Naive thymus-derived CD4-positive, alpha-beta T cell (primary cell): ENCODE measurements at regions of chrX and their contacts with region 1.

Region 1: DNA sequence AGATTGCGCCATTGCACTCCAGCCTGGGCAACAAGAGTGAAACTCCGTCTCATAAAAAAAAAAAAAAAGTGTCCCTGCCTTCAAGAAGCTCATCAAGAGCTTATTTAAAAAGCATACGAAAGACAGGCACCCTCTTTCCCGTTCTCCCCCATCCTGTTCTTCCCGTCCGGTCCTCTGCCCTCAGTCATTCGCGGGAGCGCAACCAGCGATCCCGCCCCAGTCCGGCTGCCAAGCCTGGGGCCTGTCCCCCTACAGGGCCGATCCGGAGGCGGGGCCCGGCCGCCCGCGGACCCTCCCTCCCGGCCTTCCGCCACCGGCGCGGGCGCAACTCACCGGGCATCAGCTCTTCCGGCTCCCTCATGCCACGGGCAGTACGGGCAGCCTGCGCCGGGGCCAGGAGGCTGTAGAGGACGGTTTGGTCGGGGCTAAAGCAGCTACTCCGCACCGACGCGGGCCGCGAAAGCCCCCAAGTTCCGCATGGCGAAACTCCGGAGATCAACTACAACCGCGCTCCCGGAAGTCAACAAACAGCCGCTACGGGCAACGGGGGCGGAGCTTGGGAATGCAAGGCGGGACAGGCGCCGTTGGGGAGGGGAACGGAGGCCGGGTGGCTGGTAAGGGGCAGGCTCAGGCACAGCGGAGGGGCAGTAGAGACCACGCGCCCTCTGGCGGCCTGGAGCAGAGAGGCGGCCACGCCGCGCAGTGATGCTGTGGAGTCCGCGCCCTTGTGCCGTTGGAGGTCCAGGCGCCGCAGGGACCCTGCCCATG is at the start of gene RPGR:
- DNase-seq: peak; percentile 80 to 91 (median 88)
- ATAC-seq: peak; percentile 99
- H3K4me3 ChIP-seq: peak within 1 kb of the TSS; percentile 67
- H3K4me3 Mint-ChIP-seq: peak within 1 kb of the TSS; percentile 88 to 96 (median 92)
- H3K27ac ChIP-seq: peak within 1 kb of the TSS; percentile 77
- H3K27ac Mint-ChIP-seq: peak within 1 kb of the TSS; percentile 80 to 98 (median 93)
- H3K4me1 ChIP-seq: peaks cover 0 to 12% of the 10 kb centered on the region in 2 donors
- H3K4me1 Mint-ChIP-seq: peaks cover 1 to 28% (median 26%) of the 10 kb centered on the region in 7 donors
- H3K27me3 ChIP-seq: no peaks in the 10 kb centered on the region
- H3K27me3 Mint-ChIP-seq: no peaks in the 10 kb centered on the region
- total RNA-seq, gene RPGR: 4.3 to 26.0 (median 10.9) TPM

Region 2: DNA sequence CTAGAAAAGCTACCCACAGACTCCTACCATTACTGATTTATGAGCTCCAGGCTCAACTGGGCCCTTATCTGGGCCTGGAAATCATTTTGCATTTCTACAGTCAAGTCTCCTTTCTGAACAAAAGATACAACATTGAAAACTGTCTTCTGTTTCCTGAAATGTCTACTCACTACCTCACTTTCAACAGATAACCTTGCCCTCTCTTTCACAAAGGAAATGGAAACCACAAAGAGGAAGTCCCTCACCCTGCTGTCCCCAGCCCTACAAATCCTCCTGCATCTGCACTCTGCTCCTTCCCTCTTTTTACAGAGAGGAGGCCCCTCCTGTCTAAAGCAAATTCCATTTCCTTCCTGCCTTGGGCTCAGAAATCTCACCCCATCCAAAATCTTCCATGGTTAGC is 572.2 kb before region 1 on chrX:
- CTCF ChIA-PET with region 1: no interaction called
- POLR2A ChIA-PET with region 1: no interaction called
- intact Hi-C with region 1: loop called in 1 of 2 experiments (anchors 5 kb)
- DNase-seq: peak in 6 of 9 donors; percentile 15 to 53 (median 44)
- ATAC-seq: peak; percentile 91
- H3K4me3 ChIP-seq: peak overlapping the region; percentile 25
- H3K4me3 Mint-ChIP-seq: no peak overlapping the region
- H3K27ac ChIP-seq: peak overlapping the region; percentile 26
- H3K27ac Mint-ChIP-seq: no peak overlapping the region
- H3K4me1 ChIP-seq: peaks cover 37% of the 10 kb centered on the region in 2 donors
- H3K4me1 Mint-ChIP-seq: peaks cover 0 to 18% (median 6%) of the 10 kb centered on the region in 7 donors
- H3K27me3 ChIP-seq: no peaks in the 10 kb centered on the region
- H3K27me3 Mint-ChIP-seq: no peaks in the 10 kb centered on the region

Region 3: DNA sequence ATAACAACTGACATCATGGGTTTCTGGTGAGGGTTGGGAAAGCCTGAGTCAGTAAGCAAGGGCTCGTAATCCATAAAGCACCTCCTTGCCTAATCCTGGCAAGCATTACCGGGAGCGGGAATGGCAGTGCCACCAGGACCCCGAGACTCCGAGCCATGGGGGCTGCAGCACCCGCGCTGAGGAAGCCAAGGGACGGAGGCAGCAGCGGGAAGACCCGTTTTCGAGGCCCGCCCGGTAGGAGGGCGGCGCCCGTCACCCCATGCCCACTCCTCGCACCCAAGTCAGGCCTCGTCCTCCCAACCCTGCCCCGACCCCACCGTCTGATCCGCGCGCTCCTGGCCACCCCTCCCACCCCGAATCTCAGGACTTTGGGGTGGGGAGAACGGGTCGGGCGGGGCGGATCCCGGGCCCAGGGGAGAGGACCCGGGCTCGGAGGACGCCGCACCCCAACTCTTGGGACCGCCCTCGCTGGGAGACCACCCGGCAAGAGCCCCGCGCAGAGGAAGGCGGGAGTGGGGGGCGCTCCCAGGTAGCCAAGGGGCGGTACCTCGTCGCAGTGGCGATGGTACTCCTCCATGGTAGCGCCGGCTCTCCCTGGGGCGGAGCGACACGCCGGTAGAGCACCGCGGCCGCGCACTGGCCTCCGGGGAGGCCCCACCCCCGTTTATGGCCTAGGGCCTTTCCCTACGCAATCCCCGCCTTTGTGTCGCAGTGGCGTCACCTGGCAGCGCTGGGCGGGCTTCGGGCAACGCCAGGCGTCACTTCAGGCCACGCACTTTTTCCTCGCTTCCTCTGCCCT is 480.1 kb before region 1 on chrX and contains the start of gene DYNLT3:
- CTCF ChIA-PET with region 1: no interaction called
- POLR2A ChIA-PET with region 1: no interaction called
- intact Hi-C with region 1: loop called (anchors 1 to 5 kb)
- DNase-seq: peak; percentile 51 to 80 (median 71)
- ATAC-seq: peak; percentile 99
- H3K4me3 ChIP-seq: peak within 1 kb of the TSS; percentile 84
- H3K4me3 Mint-ChIP-seq: peak within 1 kb of the TSS; percentile 68 to 93 (median 88)
- H3K27ac ChIP-seq: peak within 1 kb of the TSS; percentile 96
- H3K27ac Mint-ChIP-seq: peak within 1 kb of the TSS; percentile 89 to 98 (median 94)
- H3K4me1 ChIP-seq: peaks cover 4 to 8% of the 10 kb centered on the region in 2 donors
- H3K4me1 Mint-ChIP-seq: peaks cover 5 to 44% (median 31%) of the 10 kb centered on the region in 7 donors
- H3K27me3 ChIP-seq: no peaks in the 10 kb centered on the region
- H3K27me3 Mint-ChIP-seq: no peaks in the 10 kb centered on the region
- total RNA-seq, gene DYNLT3: 13.8 to 39.3 (median 25.8) TPM

Region 4: GRCh38 chrX:38260231-38260630 is 67.0 kb before region 1 on chrX:
- CTCF ChIA-PET with region 1: no interaction called
- POLR2A ChIA-PET with region 1: no interaction called
- intact Hi-C with region 1: loop called in 1 of 2 experiments (anchors 1 kb)
- DNase-seq: no peak
- ATAC-seq: no peak
- H3K4me3 ChIP-seq: no peak overlapping the region
- H3K4me3 Mint-ChIP-seq: no peak overlapping the region
- H3K27ac ChIP-seq: no peak overlapping the region
- H3K27ac Mint-ChIP-seq: no peak overlapping the region
- H3K4me1 ChIP-seq: no peaks in the 10 kb centered on the region
- H3K4me1 Mint-ChIP-seq: no peaks in the 10 kb centered on the region
- H3K27me3 ChIP-seq: no peaks in the 10 kb centered on the region
- H3K27me3 Mint-ChIP-seq: no peaks in the 10 kb centered on the region

Region 5: DNA sequence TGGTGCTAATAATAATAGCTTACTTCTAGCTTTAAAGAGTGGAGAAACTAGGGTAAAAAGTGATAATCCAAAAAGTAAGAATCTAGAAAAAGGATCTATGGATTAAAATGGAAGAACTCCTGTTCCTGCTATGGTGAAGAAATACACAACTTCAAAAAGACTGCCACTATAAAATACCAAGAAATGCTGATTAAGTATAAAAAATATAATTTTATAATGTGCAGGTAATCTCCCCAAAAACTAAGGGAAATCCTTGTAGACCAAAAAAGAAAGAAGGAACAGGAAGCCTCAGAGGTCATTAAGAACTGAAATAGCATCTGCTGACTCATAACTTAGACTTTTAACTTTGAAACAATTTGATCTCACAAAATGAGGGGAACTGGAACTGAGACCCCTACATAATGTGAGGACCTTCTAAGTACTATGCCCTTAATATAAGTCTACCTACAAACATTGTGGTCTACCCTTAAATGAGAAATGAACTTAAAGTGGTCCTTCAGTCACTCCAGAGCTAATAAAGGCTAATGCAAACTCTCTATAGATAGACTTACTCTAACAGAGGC is 56.0 kb before region 1 on chrX:
- CTCF ChIA-PET with region 1: no interaction called
- POLR2A ChIA-PET with region 1: no interaction called
- intact Hi-C with region 1: no loop called
- DNase-seq: no peak
- ATAC-seq: no peak
- H3K4me3 ChIP-seq: no peak overlapping the region
- H3K4me3 Mint-ChIP-seq: no peak overlapping the region
- H3K27ac ChIP-seq: no peak overlapping the region
- H3K27ac Mint-ChIP-seq: no peak overlapping the region
- H3K4me1 ChIP-seq: no peaks in the 10 kb centered on the region
- H3K4me1 Mint-ChIP-seq: peaks cover 0 to 6% (median 0%) of the 10 kb centered on the region in 7 donors
- H3K27me3 ChIP-seq: no peaks in the 10 kb centered on the region
- H3K27me3 Mint-ChIP-seq: no peaks in the 10 kb centered on the region